SK-N-SH (cell line): ENCODE measurements at regions of chr19 and their contacts with region 1.

Region 1: DNA sequence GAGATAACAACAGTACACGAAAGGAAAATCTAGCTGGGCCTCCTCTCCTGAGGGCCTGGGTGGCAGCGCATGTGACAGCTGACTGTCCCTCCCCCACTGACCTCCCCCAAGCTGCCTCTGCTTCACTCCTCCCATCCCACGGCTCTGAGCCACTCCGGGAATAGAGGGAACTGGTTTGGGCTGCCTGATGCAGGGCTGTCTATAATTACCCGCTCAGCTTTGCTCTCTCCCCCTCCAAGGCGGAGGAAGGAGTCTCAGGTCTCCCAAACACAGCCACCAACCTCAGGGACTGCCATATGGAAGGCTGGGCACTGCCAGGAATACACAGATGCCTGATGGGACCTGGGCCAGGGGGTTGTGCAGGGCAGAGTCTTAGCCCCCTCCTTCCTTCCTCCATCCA is 7.9 kb downstream of the NAPA start:
- DNase-seq: no peak
- H3K4me3 ChIP-seq: no peak overlapping the region
- H3K27ac ChIP-seq: peak overlapping the region in 1 of 2 experiments; percentile 89; a peak in 1 of 4 replicates
- H3K4me1 ChIP-seq: peaks cover 6 to 27% of the 10 kb centered on the region in 2 experiments; a peak in 2 of 4 replicates
- H3K27me3 ChIP-seq: no peaks in the 10 kb centered on the region
- CTCF ChIP-seq: no peak
- EP300 ChIP-seq: no peak
- RAD21 ChIP-seq: no peak

Region 2: DNA sequence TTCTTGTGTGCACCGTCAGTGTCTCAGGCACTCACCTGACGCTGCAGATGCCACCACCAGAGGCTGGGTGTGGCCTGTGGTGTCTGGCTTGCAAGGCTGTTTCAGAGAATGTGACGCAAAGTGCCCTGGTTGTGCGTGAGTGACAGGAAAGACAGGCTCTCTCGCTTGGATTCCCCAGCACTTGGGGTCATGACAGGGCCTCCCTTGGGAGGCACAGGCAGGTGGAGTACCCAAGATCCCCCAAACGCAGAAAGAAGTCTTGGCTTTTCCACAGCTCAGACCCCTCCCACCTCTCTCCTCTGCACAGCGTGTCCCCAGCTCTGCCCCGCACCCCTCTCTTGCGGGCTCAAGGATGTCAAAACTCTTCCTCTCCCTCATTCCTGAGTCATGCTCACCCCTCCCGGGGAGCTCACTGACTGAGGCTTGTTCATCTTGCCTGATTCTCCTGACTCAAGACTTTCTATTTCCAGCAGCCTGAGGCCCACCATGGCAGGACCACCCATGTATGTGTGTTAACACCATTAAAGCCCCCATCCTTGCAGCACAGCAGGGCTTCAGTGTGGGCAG is 136.9 kb before region 1 on chr19:
- CTCF ChIA-PET with region 1: no interaction called
- POLR2A ChIA-PET with region 1: no interaction called
- DNase-seq: no peak
- H3K4me3 ChIP-seq: no peak overlapping the region
- H3K27ac ChIP-seq: no peak overlapping the region
- H3K4me1 ChIP-seq: no peaks in the 10 kb centered on the region
- H3K27me3 ChIP-seq: no peaks in the 10 kb centered on the region
- CTCF ChIP-seq: no peak
- EP300 ChIP-seq: no peak
- RAD21 ChIP-seq: no peak

Region 3: DNA sequence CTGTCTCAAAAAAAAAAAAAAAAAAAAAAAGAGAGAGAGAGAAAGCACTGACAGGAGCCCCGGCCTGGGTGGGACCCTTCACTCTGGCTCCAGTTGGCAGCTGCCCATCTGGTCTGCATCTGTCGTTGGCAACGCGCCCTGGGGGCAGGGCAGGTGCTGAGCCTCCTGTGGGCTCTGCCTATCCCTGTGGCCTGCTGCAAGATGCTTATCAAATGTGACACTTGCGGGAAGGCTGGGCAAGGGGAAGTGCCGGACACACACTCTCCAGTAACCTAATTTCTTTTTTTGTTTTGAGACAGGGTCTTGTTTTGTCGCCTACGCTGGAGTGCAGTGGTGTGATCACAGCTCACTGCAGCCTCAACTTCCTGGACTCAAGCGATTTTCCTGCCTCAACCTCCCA is 12.3 kb before region 1 on chr19:
- CTCF ChIA-PET with region 1: interaction called, 13 read pairs
- POLR2A ChIA-PET with region 1: interaction called, 3 read pairs
- DNase-seq: peak; percentile 98
- H3K4me3 ChIP-seq: no peak overlapping the region
- H3K27ac ChIP-seq: peak overlapping the region in 1 of 2 experiments; percentile 84; a peak in 2 of 4 replicates
- H3K4me1 ChIP-seq: peaks cover 0 to 82% of the 10 kb centered on the region in 2 experiments; a peak in 1 of 4 replicates
- H3K27me3 ChIP-seq: no peaks in the 10 kb centered on the region
- CTCF ChIP-seq: no peak
- EP300 ChIP-seq: peak in 1 of 2 experiments; percentile 65; a peak in 1 of 4 replicates
- RAD21 ChIP-seq: no peak

Region 4: GRCh38 chr19:47745010-47745901 is 238.2 kb after region 1 on chr19 and contains the start of gene NOP53:
- CTCF ChIA-PET with region 1: interaction called, 10 read pairs
- POLR2A ChIA-PET with region 1: no interaction called
- DNase-seq: peak; percentile 96
- H3K4me3 ChIP-seq: peak within 1 kb of the TSS; percentile 65 to 83
- H3K27ac ChIP-seq: peak within 1 kb of the TSS; percentile 91 to 97
- H3K4me1 ChIP-seq: peaks cover 12 to 14% of the 10 kb centered on the region in 2 experiments; a peak in 1 of 4 replicates
- H3K27me3 ChIP-seq: no peaks in the 10 kb centered on the region
- CTCF ChIP-seq: no peak
- EP300 ChIP-seq: peak in 1 of 2 experiments; percentile 39; a peak in 1 of 4 replicates
- RAD21 ChIP-seq: no peak
- polyA plus RNA-seq, gene NOP53: 198 and 275 TPM in 2 replicates